Activated CD4-positive, alpha-beta T cell treated with anti-CD3 and anti-CD28 coated beads, Interleukin-2, amount 10 ng/mL, durations not matched to agents 24 days and 14 days (primary cell): ENCODE measurements at regions of chr3 and their contacts with region 1.

Region 1: DNA sequence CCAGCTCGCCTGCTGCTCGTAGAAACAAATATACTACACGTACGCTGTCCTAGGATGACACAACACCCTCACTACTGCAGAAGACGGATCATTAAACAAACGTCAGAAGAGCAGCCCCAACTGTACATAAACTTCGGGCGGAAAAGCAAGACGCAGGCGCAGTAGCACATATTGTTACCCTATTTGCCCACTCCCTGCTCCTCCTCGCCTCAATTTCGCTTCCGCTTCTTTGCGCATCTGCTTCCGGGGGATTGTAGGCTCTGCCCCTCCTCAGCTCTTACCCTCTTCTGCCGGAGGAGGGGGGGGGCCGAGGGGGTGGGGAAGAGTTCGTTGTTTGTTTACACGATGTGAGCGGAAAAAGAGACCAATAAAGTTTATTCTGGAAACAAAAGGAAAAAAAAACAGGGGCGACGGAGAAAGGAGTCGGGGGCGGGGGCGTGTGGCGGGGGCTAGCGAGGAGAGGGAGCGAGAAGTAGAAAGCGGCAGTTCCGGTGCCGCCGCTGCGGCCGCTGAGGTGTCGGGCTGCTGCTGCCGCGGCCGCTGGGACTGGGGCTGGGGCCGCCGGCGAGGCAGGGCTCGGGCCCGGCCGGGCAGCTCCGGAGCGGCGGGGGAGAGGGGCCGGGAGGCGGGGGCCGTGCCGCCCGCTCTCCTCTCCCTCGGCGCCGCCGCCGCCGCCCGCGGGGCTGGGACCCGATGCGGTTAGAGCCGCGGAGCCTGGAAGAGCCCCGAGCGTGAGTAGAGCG is at the start of gene PIK3CA:
- DNase-seq: peak; percentile 97
- H3K4me3 Mint-ChIP-seq: peak within 1 kb of the TSS; percentile 91
- H3K27ac Mint-ChIP-seq: peak within 1 kb of the TSS; percentile 95
- H3K4me1 Mint-ChIP-seq: peaks cover 26% of the 10 kb centered on the region
- H3K27me3 Mint-ChIP-seq: peaks cover 19% of the 10 kb centered on the region
- total RNA-seq, gene PIK3CA: 17.3 and 18.5 TPM in 2 replicates

Region 2: DNA sequence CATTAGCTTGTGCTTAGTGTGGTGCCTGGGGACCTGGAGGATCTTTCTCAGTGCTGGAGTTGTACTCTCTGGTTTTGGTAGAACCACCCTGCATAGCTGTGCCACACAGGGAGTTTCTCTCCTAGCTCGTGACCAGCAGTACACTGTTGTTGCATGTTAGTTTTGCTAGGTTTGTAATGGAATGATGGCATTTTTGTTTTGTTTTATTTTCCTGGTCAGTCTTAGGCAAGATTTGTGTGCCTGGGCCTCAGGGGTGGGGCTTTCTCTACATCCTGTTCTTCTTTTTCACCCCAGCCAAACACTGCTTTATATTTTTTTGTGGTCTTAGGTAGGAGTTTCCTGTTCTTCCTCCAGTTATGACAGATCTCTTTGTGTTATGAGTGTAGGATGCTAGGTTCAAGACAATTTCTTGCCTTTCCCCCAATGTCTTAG is 1146.4 kb before region 1 on chr3:
- intact Hi-C with region 1: loop called (anchors 5 kb)
- DNase-seq: peak; percentile 77
- H3K4me3 Mint-ChIP-seq: peak overlapping the region; percentile 63
- H3K27ac Mint-ChIP-seq: peak overlapping the region; percentile 91
- H3K4me1 Mint-ChIP-seq: peaks cover 36% of the 10 kb centered on the region
- H3K27me3 Mint-ChIP-seq: no peaks in the 10 kb centered on the region

Region 3: DNA sequence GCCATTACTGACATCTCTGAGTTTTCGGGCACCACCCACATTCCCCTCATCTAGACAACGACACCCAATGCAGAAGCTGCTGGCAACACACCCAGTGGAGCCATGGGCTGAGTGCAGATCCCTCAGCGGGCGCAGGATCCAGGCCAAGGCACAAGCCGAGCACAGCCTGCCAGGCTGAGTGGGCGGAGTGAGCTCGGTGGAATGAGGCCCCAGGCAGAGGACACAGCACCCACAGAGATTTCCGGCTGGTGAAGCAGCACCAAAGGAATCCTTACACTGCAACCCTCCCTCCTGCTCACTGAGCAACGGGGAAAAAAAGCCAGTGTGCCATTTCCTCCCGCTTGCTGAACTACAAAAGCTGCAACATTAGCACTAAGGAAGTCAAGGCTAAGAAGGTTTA is 110.7 kb before region 1 on chr3:
- intact Hi-C with region 1: loop called (anchors 1 kb)
- DNase-seq: peak; percentile 88
- H3K4me3 Mint-ChIP-seq: peak overlapping the region; percentile 65
- H3K27ac Mint-ChIP-seq: peak overlapping the region; percentile 59
- H3K4me1 Mint-ChIP-seq: peaks cover 15% of the 10 kb centered on the region
- H3K27me3 Mint-ChIP-seq: no peaks in the 10 kb centered on the region

Region 4: DNA sequence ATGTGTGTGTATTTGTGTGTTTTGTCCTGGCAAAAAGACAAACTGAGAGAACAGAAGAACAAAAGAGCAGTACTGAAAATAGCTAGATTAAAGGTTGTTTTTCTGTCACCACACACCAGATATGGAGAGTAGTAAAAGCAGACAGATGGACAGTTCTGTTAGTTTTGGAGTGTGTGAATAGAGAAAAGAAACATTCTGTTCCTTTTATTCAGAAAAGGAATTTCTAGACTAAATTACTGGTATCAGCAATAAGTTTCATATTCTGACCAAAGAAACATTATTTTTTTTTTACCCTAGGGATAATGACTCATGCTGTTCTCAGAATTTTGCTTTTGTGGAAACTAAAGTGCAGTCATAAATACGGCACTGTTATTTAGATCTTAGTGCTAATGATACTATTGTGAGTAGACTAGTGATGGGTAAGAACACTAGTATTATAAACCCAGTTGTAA is 33.0 kb after region 1 on chr3:
- intact Hi-C with region 1: loop called (anchors 1 kb)
- DNase-seq: no peak
- H3K4me3 Mint-ChIP-seq: no peak overlapping the region
- H3K27ac Mint-ChIP-seq: no peak overlapping the region
- H3K4me1 Mint-ChIP-seq: peaks cover 11% of the 10 kb centered on the region
- H3K27me3 Mint-ChIP-seq: no peaks in the 10 kb centered on the region

Region 5: DNA sequence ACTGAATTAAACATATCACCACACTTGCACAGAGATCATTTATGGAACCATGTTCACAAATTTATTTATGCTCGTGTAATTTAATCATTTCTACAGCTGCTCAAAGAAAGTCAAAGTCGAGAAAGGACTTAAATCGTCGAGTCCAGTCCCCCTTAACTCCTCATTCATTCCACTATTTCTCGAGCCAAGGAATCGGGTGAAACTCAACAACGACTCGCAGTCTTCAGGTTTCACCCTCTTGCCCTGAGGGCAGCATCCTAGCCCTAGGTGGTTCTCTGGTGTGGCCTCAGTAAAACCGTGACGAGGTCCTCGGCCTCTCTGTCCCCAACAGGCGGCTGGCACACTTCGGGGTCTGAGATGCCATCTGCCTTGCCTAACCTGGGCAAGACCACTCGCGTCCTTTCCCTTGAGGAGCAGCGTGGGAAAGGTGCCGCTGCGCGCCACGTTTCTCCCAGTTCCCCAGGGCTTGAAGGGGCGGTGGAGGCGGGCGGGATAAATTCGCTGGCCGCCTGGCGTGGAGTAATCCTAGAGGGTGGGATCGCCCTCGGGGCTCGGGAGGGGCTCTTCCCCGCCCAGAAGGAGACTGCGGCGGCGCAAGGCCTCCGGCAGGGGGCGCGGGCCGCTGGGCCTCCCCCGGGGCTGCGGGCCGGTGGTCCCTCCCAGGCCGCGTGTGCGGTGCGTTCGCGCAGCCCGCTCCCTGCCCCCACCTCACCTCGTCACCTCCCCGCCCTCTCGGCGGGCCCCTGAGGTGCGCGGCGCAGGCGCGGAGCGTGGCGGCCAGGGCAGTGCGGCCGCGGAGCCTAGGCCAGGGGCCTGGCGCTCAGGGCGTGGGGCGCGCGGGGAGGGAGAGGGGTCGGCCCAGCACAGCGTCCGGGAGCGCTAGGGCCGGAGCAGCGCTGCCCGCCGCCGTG is 174.5 kb after region 1 on chr3 and contains the start of gene ZNF639:
- intact Hi-C with region 1: loop called (anchors 1 kb)
- DNase-seq: peak; percentile 95
- H3K4me3 Mint-ChIP-seq: peak within 1 kb of the TSS; percentile 89
- H3K27ac Mint-ChIP-seq: peak within 1 kb of the TSS; percentile 93
- H3K4me1 Mint-ChIP-seq: peaks cover 27% of the 10 kb centered on the region
- H3K27me3 Mint-ChIP-seq: peaks cover 5% of the 10 kb centered on the region
- total RNA-seq, gene ZNF639: 36.7 and 38.1 TPM in 2 replicates

Region 6: GRCh38 chr3:179486806-179487205 is 338.8 kb after region 1 on chr3:
- intact Hi-C with region 1: no loop called
- DNase-seq: no peak
- H3K4me3 Mint-ChIP-seq: no peak overlapping the region
- H3K27ac Mint-ChIP-seq: no peak overlapping the region
- H3K4me1 Mint-ChIP-seq: no peaks in the 10 kb centered on the region
- H3K27me3 Mint-ChIP-seq: no peaks in the 10 kb centered on the region

Region 7: DNA sequence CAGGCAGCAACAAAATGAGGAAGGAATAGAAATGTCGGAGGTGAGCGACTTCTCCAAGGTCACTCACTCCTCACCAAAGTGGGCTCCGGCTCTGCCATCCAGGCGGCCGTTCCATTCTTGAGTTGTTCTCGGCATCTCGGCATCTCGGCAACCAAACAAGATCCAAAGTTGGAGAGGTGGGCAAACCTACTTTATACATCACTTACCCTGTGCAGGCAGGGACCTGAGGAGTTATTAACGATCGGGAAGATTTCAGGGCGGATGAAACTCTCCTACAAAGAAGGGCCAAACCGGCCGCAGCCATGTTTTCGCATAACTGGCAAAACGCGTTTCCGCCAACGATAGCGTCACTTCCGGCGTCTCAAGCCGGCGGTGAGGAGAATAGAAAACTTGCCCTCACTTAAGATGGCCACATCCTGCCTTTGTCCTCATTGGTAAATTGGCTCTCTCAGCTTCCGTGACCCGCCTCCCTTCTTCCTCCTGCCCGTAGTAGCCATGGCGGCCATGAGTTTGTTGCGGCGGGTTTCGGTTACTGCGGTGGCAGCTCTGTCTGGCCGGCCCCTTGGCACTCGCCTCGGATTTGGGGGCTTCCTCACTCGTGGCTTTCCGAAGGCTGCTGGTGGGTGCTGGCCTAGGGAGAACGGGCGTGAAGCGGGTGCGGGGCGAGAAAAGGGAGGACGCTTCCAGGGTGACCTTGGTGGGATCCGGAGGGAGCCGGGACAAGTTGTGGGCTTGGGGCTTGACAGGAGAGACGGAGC is 456.5 kb after region 1 on chr3 and contains the starts of genes MRPL47 and NDUFB5:
- intact Hi-C with region 1: loop called (anchors 1 kb)
- DNase-seq: peak; percentile 98
- H3K4me3 Mint-ChIP-seq: peak within 1 kb of the TSS; percentile 99
- H3K27ac Mint-ChIP-seq: peak within 1 kb of the TSS; percentile 100
- H3K4me1 Mint-ChIP-seq: peaks cover 34% of the 10 kb centered on the region
- H3K27me3 Mint-ChIP-seq: no peaks in the 10 kb centered on the region
- total RNA-seq, gene MRPL47: 66.6 and 68.2 TPM in 2 replicates
- total RNA-seq, gene NDUFB5: 91.8 and 98.6 TPM in 2 replicates